ENCODE measurements at regions of chr11 and their contacts with region 1.

Region 1: GRCh38 chr11:66677599-66678375 is at the start of gene RBM4B:
- DNase-seq: peak; percentile 99
- H3K4me3 Mint-ChIP-seq: peak within 1 kb of the TSS; percentile 96
- H3K27ac Mint-ChIP-seq: peak within 1 kb of the TSS; percentile 99
- H3K4me1 Mint-ChIP-seq: peaks cover 34% of the 10 kb centered on the region
- H3K27me3 Mint-ChIP-seq: no peaks in the 10 kb centered on the region
- total RNA-seq, gene RBM4B: 15.6 and 16.0 TPM in 2 replicates

Region 2: GRCh38 chr11:66480117-66480938 is 197.5 kb before region 1 on chr11 and contains the start of gene DPP3:
- intact Hi-C with region 1: loop called (anchors 1 kb)
- DNase-seq: peak; percentile 99
- H3K4me3 Mint-ChIP-seq: peak within 1 kb of the TSS; percentile 93
- H3K27ac Mint-ChIP-seq: peak within 1 kb of the TSS; percentile 90
- H3K4me1 Mint-ChIP-seq: peaks cover 27% of the 10 kb centered on the region
- H3K27me3 Mint-ChIP-seq: no peaks in the 10 kb centered on the region
- total RNA-seq, gene DPP3: 97.1 and 106 TPM in 2 replicates

Region 3: GRCh38 chr11:66579017-66579606 is 98.7 kb before region 1 on chr11:
- intact Hi-C with region 1: loop called (anchors 1 kb)
- DNase-seq: peak; percentile 92
- H3K4me3 Mint-ChIP-seq: no peak overlapping the region
- H3K27ac Mint-ChIP-seq: no peak overlapping the region
- H3K4me1 Mint-ChIP-seq: peaks cover 11% of the 10 kb centered on the region
- H3K27me3 Mint-ChIP-seq: peaks cover 19% of the 10 kb centered on the region

Region 4: DNA sequence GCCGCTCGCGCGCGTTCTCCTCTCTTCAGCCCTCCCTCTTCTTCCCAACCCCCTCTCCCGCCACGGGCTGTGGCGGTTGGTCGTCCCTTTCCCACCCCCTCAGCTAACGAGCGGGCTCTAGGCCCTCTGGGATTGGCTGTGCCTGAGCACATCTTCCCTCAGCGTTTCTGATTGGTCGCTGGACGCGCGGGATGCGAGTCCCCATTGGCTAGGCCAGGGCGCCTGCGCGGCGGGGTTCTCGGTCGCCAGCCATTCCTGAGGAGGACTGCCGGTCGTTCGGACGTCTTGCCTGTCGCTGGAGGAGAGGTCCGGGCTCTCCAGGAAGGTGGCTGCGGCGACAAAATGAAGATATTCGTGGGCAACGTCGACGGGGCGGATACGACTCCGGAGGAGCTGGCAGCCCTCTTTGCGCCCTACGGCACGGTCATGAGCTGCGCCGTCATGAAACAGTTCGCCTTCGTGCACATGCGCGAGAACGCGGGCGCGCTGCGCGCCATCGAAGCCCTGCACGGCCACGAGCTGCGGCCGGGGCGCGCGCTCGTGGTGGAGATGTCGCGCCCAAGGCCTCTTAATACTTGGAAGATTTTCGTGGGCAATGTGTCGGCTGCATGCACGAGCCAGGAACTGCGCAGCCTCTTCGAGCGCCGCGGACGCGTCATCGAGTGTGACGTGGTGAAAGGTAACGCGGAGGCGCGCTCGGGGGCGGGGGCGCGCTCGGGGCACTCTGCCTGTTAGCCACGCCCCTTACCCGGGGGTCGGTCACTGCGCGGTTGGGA is 61.2 kb before region 1 on chr11 and contains the start of gene RBM14:
- intact Hi-C with region 1: loop called (anchors 1 kb)
- DNase-seq: peak; percentile 100
- H3K4me3 Mint-ChIP-seq: peak within 1 kb of the TSS; percentile 98
- H3K27ac Mint-ChIP-seq: peak within 1 kb of the TSS; percentile 99
- H3K4me1 Mint-ChIP-seq: peaks cover 33% of the 10 kb centered on the region
- H3K27me3 Mint-ChIP-seq: peaks cover 2% of the 10 kb centered on the region
- total RNA-seq, gene RBM14: 209 and 214 TPM in 2 replicates

Measured in activated CD4-positive, alpha-beta T cell treated with anti-CD3 and anti-CD28 coated beads, Interleukin-2, amount 10 ng/mL, durations not matched to agents 24 days and 14 days (primary cell).